Activated CD4-positive, alpha-beta memory T cell treated with anti-CD3 and anti-CD28 coated beads, Interleukin-2, amount 10 ng/mL, durations not matched to agents 7 days and 5 days (primary cell): ENCODE measurements at regions of chr2 and their contacts with region 1.

Region 1: GRCh38 chr2:134411828-134412638 is 158.2 kb downstream of the MGAT5 start:
- DNase-seq: peak; percentile 74
- H3K4me3 Mint-ChIP-seq: no peak overlapping the region
- H3K27ac Mint-ChIP-seq: no peak overlapping the region
- H3K4me1 Mint-ChIP-seq: peaks cover 35% of the 10 kb centered on the region
- H3K27me3 Mint-ChIP-seq: no peaks in the 10 kb centered on the region

Region 2: DNA sequence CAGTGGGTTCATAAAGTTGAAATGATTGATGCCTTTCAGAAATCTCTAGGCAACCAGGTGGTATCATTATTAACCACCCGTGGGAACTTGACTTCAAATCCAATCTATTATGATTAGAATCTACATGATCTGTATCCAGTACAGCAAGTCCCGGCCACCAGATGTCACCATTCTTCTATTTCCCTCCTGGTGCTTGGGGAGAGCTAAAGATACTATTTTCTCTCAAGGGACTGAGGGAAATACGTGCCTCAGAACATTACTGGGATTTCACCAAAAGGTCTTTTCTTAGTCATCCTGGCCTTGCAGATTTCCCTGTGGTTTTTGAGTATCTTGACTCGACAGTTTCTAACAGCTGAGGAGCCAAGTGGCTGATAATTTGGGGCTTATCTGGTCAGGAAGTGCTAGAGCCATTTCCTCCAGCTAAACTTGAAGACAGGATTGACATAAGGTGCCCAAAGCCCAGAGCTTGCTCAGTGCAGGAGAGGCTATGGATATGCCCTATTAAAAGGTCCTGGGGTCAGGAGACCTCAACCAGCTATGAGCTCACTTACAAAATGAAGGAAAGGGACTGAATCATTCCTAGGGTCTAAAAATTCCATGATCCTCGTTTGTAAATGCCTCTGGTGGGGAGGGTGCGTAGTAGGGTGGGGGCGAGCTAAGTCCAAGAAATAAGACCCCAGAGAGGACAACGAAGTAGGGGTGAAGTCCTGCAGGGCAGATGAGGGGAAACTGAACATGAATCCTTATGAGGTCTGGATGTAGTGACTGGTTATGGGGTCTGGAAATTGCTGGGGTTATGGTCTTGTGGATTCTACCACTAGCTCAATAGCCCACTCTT is 293.5 kb before region 1 on chr2:
- CTCF ChIA-PET with region 1: interaction called, 141 read pairs
- POLR2A ChIA-PET with region 1: interaction called, 23 read pairs
- DNase-seq: peak; percentile 87
- H3K4me3 Mint-ChIP-seq: peak overlapping the region; percentile 84
- H3K27ac Mint-ChIP-seq: peak overlapping the region; percentile 92
- H3K4me1 Mint-ChIP-seq: peaks cover 37% of the 10 kb centered on the region
- H3K27me3 Mint-ChIP-seq: peaks cover 14% of the 10 kb centered on the region

Region 3: GRCh38 chr2:134207564-134208209 is 204.3 kb before region 1 on chr2:
- CTCF ChIA-PET with region 1: interaction called, 13 read pairs
- POLR2A ChIA-PET with region 1: no interaction called
- DNase-seq: peak; percentile 63
- H3K4me3 Mint-ChIP-seq: no peak overlapping the region
- H3K27ac Mint-ChIP-seq: no peak overlapping the region
- H3K4me1 Mint-ChIP-seq: peaks cover 6% of the 10 kb centered on the region
- H3K27me3 Mint-ChIP-seq: no peaks in the 10 kb centered on the region

Region 4: GRCh38 chr2:134245340-134245984 is 166.6 kb before region 1 on chr2:
- CTCF ChIA-PET with region 1: interaction called, 41 read pairs
- POLR2A ChIA-PET with region 1: interaction called, 6 read pairs
- DNase-seq: peak; percentile 76
- H3K4me3 Mint-ChIP-seq: no peak overlapping the region
- H3K27ac Mint-ChIP-seq: no peak overlapping the region
- H3K4me1 Mint-ChIP-seq: peaks cover 62% of the 10 kb centered on the region
- H3K27me3 Mint-ChIP-seq: peaks cover 32% of the 10 kb centered on the region